Right ventricle myocardium inferior (tissue), 1 donor: ENCODE measurements at regions of chr7 and their contacts with region 1.

Region 1: GRCh38 chr7:66330961-66331360 is 125.8 kb downstream of the TPST1 start:
- DNase-seq: peak; percentile 76
- ATAC-seq: peak; percentile 94

Region 2: DNA sequence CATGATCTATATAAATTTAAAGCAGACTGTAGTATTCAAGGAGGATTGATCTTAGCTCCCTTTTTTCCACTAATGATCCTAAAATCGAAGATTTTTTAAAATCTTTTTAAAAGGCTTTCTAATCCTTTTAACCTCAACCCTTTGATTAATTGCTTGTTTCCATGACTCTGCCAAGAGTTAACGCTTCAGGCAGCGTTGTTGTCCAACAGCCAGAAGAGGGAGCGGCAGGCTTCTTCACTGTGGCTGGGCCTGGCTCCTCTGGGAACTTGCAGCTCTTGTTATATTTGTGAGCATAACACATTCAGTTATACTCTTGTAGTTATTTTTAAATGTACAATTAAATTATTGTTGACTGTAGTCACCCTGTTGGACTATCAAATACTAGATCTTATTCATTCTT is 190.0 kb before region 1 on chr7:
- intact Hi-C with region 1: loop called (anchors 10 kb)
- DNase-seq: no peak
- ATAC-seq: no peak

Region 3: DNA sequence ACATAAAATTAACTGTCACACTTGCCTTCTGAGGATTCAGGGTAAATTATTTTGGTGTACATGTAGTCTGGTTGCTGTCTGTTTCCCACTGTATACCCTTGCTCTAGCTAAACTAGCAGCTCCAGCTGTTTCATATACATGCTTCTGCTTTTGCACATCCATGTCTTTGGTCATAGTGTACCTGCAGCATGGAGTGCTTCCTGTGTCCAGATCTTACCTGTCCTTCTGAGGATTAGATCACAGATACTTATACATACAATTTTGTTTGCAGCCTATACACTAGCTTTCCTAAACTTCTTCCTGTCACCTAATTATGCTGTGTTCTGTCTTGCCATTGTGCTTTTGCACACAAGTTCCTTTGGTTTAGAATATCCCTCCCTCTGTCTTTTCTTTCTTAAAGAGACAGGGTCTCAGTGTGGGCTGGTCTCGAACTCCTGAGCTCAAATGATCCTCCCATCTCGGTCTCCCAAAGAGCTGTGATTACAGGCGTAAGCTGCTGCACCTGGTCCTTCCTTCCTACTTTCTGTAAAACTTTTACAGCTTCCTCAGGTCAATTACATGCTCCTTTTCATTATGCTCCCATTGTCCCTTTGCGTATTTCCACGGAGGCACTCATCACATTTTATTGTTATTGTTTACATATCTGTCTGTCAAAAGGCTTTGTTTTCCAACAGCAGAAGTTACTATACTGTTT is 92.0 kb before region 1 on chr7:
- intact Hi-C with region 1: no loop called
- DNase-seq: no peak
- ATAC-seq: no peak